ENCODE measurements at regions of chr9 and their contacts with region 1.

Region 1: DNA sequence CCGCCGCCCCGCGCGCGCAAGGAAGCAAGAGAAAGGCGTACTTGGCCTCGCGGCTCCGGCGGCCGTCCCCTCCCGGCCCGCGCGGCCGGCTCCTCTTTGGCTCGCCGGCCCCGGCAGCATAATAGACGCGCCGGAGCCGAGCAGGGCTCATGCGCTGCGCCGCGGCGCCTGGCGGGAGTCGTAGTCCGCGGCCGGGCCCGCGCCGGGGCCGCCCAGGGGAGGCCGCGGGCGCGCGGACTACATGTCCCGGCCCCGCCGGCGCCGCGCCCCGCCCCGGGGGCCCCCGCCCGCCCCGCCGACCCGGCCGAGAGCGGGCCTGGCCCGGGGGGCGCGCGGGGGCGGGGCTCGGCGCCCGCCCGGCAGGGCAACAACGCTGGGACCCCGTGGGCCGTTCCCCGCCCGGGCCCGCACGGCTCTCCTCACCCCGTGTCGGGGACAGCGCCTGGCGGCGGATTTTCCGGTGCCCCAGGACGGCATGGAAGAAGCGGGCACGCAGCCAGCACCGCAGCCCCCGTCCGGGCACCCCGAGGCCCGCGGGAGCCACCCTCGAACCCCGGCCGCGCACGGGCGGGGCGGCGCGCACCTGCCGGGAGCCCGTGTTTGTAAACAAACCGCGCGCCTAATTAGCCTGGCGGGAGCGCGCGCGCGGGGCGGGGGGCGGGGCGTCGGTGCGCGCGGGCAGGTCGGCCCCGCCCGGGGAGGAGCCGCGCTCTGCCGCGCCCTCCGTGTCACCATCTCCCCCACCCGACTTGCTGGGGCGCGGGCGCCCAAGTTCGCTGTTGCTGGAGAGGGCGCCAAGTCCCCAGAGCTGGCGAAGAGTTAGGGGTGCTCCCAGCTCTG is at the start of gene BRD3:
- DNase-seq: peak; percentile 79 to 86 (median 85)
- ATAC-seq: peak; percentile 88
- H3K4me3 ChIP-seq: peak within 1 kb of the TSS; percentile 97
- H3K4me3 Mint-ChIP-seq: peak within 1 kb of the TSS; percentile 88 to 97 (median 91)
- H3K27ac ChIP-seq: peak within 1 kb of the TSS; percentile 95
- H3K27ac Mint-ChIP-seq: peak within 1 kb of the TSS; percentile 80 to 97 (median 90)
- H3K4me1 ChIP-seq: peaks cover 21 to 26% of the 10 kb centered on the region in 2 donors
- H3K4me1 Mint-ChIP-seq: peaks cover 15 to 42% (median 29%) of the 10 kb centered on the region in 7 donors
- H3K27me3 ChIP-seq: peaks cover 0 to 4% of the 10 kb centered on the region in 2 donors
- H3K27me3 Mint-ChIP-seq: peaks cover 5 to 29% (median 14%) of the 10 kb centered on the region in 5 donors
- total RNA-seq, gene BRD3: 29.0 to 49.7 (median 40.4) TPM

Region 2: DNA sequence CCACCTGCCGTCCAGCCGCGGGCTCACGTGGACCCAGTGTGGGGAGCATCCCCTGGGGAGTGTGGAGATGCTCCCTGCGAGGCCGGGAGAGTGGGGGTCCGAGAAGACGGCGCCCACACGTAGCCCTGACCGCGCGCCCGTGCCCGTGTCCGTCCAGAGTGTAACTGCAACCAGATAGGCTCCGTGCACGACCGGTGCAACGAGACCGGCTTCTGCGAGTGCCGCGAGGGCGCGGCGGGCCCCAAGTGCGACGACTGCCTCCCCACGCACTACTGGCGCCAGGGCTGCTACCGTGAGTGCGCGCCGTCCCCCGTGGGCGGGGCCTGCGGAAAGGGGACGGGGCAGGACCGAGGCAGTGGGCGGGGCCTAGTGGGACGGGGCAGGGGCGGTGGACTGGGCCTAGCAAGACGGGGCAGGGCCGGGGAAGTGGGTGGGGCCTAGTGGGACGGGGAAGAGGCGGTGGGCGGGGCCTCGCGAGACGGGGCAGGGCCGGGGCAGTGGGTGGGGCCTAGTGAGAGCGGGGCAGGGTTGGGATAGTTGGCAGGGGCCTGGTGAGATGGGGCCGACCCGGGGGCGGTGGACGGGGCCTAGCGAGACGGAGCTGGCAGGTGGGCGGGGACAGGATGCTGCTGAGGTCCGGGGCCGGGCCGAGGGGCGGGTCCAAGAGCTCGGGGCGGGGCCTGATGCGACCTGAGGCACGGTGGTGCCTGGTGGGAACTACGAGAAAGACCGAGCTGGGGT is 1827.2 kb before region 1 on chr9:
- CTCF ChIA-PET with region 1: no interaction called
- POLR2A ChIA-PET with region 1: no interaction called
- intact Hi-C with region 1: loop called in 1 of 2 experiments (anchors 5 kb)
- DNase-seq: peak; percentile 98 to 100 (median 99)
- ATAC-seq: peak; percentile 94
- H3K4me3 ChIP-seq: peak overlapping the region; percentile 77
- H3K4me3 Mint-ChIP-seq: peak overlapping the region; percentile 97 to 99 (median 98)
- H3K27ac ChIP-seq: peak overlapping the region; percentile 69
- H3K27ac Mint-ChIP-seq: peak overlapping the region; percentile 90 to 96 (median 94)
- H3K4me1 ChIP-seq: peaks cover 11 to 17% of the 10 kb centered on the region in 2 donors
- H3K4me1 Mint-ChIP-seq: peaks cover 5 to 24% (median 21%) of the 10 kb centered on the region in 7 donors
- H3K27me3 ChIP-seq: no peaks in the 10 kb centered on the region
- H3K27me3 Mint-ChIP-seq: peaks cover 0 to 15% (median 0%) of the 10 kb centered on the region in 5 donors

Region 3: GRCh38 chr9:133149126-133150107 is 918.7 kb before region 1 on chr9:
- CTCF ChIA-PET with region 1: no interaction called
- POLR2A ChIA-PET with region 1: no interaction called
- intact Hi-C with region 1: loop called in 1 of 2 experiments (anchors 2 kb)
- DNase-seq: peak; percentile 63 to 88 (median 68)
- ATAC-seq: peak; percentile 67
- H3K4me3 ChIP-seq: peak overlapping the region; percentile 71
- H3K4me3 Mint-ChIP-seq: peak overlapping the region; percentile 55 to 83 (median 76)
- H3K27ac ChIP-seq: peak overlapping the region; percentile 80
- H3K27ac Mint-ChIP-seq: peak overlapping the region; percentile 71 to 88 (median 84)
- H3K4me1 ChIP-seq: peaks cover 27 to 34% of the 10 kb centered on the region in 2 donors
- H3K4me1 Mint-ChIP-seq: peaks cover 10 to 46% (median 35%) of the 10 kb centered on the region in 7 donors
- H3K27me3 ChIP-seq: no peaks in the 10 kb centered on the region
- H3K27me3 Mint-ChIP-seq: no peaks in the 10 kb centered on the region

Region 4: GRCh38 chr9:133992780-133993634 is 75.1 kb before region 1 on chr9:
- CTCF ChIA-PET with region 1: no interaction called
- POLR2A ChIA-PET with region 1: no interaction called
- intact Hi-C with region 1: loop called (anchors 1 kb)
- DNase-seq: peak; percentile 47 to 77 (median 63)
- ATAC-seq: peak; percentile 89
- H3K4me3 ChIP-seq: peak overlapping the region; percentile 77
- H3K4me3 Mint-ChIP-seq: peak overlapping the region; percentile 62 to 89 (median 76)
- H3K27ac ChIP-seq: peak overlapping the region; percentile 30
- H3K27ac Mint-ChIP-seq: no peak overlapping the region
- H3K4me1 ChIP-seq: peaks cover 9 to 12% of the 10 kb centered on the region in 2 donors
- H3K4me1 Mint-ChIP-seq: peaks cover 0 to 8% (median 0%) of the 10 kb centered on the region in 7 donors
- H3K27me3 ChIP-seq: no peaks in the 10 kb centered on the region
- H3K27me3 Mint-ChIP-seq: peaks cover 0 to 26% (median 4%) of the 10 kb centered on the region in 5 donors

Region 5: DNA sequence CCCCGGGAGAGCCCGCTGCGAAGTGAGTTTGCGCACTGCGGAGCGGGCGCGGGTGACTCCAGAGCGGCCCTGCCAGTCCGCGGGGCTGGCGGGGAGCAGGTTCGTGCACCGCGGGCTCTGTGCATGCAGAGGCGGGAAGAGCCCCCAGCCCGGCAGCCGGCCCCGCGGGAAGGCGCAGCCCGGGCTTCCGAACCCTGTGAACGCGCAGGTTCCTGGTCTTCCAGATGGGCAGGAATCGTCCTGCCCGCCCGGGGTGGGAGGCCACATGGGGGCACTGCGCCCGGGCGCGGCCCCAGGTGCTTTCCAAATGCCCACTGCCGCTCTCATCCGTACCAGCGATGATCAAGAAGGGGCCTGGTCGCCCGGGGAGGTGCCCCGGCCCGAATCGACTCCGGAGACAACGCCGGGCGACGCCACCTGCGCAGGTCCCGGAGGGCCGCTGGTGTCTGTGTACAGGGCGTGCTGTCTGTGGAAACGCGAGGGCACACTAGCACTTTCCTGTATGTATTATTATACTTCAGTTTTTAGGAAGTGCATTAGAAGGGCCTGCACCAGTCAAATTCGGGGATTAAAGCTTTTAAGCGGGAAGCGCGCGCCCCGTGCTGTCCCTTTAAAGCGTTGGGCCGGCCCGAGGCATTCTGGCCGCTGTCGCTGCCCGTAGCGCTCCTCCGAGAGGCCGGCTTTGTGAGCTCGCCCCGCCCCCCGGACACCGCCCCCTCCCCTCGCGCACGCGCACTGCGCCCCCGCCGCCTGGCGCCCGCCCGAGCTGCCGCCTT is 67.4 kb after region 1 on chr9 and contains the start of gene WDR5:
- CTCF ChIA-PET with region 1: no interaction called
- POLR2A ChIA-PET with region 1: interaction called, 10 read pairs
- intact Hi-C with region 1: loop called (anchors 1 kb)
- DNase-seq: peak; percentile 85 to 97 (median 92)
- ATAC-seq: peak; percentile 96
- H3K4me3 ChIP-seq: peak within 1 kb of the TSS; percentile 94
- H3K4me3 Mint-ChIP-seq: peak within 1 kb of the TSS; percentile 88 to 98 (median 92)
- H3K27ac ChIP-seq: peak within 1 kb of the TSS; percentile 80
- H3K27ac Mint-ChIP-seq: peak within 1 kb of the TSS; percentile 84 to 93 (median 89)
- H3K4me1 ChIP-seq: peaks cover 19 to 28% of the 10 kb centered on the region in 2 donors
- H3K4me1 Mint-ChIP-seq: peaks cover 33 to 65% (median 49%) of the 10 kb centered on the region in 7 donors
- H3K27me3 ChIP-seq: no peaks in the 10 kb centered on the region
- H3K27me3 Mint-ChIP-seq: no peaks in the 10 kb centered on the region
- total RNA-seq, gene WDR5: 16.0 to 42.3 (median 30.9) TPM

Region 6: DNA sequence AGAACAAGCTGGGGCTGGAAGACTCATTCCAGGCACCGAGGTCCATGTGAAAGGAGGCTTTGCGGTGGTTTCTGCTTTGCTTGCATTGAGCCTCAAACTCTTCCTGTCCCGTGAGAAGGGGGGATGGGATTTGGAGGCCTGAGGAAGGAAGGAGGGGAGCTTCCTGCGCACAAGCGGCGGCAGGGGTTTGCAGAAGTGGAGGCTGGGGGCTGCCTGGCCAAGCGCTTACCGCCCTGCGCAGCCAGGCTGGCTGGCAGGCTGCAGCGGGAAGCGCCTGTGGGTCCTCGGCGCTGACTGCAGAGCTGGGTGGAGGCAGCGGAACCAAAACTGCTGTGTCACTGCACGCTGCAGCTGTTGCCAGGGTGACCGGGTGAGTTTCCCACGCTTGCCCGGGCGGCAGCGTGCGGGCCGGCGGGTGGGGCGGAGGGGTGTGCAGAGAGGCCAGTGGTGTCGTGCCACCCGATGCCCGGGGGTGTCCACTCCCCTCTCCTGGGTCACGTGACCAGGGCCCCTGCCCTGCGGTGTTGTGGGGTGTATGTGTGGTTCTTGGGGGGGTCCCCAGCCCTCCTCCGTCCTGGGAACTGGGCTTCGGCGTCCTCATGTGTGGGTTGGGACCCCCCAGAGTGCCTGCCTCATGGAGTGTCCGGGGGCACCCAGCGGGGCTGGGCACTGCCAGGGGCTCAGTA is 339.1 kb after region 1 on chr9:
- CTCF ChIA-PET with region 1: no interaction called
- POLR2A ChIA-PET with region 1: no interaction called
- intact Hi-C with region 1: loop called in 1 of 2 experiments (anchors 5 kb)
- DNase-seq: peak; percentile 52 to 77 (median 69)
- ATAC-seq: peak; percentile 79
- H3K4me3 ChIP-seq: peak overlapping the region; percentile 51
- H3K4me3 Mint-ChIP-seq: peak overlapping the region; percentile 69 to 87 (median 79)
- H3K27ac ChIP-seq: no peak overlapping the region
- H3K27ac Mint-ChIP-seq: peak overlapping the region in 3 of 9 donors; percentile 74 to 81 (median 75)
- H3K4me1 ChIP-seq: peaks cover 40 to 49% of the 10 kb centered on the region in 2 donors
- H3K4me1 Mint-ChIP-seq: peaks cover 30 to 46% (median 41%) of the 10 kb centered on the region in 7 donors
- H3K27me3 ChIP-seq: no peaks in the 10 kb centered on the region
- H3K27me3 Mint-ChIP-seq: peaks cover 0 to 10% (median 0%) of the 10 kb centered on the region in 5 donors

Region 7: GRCh38 chr9:135907431-135908092 is 1839.4 kb after region 1 on chr9 and contains the start of gene CAMSAP1:
- CTCF ChIA-PET with region 1: no interaction called
- POLR2A ChIA-PET with region 1: no interaction called
- intact Hi-C with region 1: loop called in 1 of 2 experiments (anchors 2 kb)
- DNase-seq: peak; percentile 89 to 97 (median 93)
- ATAC-seq: peak; percentile 91
- H3K4me3 ChIP-seq: peak within 1 kb of the TSS; percentile 69
- H3K4me3 Mint-ChIP-seq: peak within 1 kb of the TSS; percentile 85 to 94 (median 90)
- H3K27ac ChIP-seq: peak within 1 kb of the TSS; percentile 89
- H3K27ac Mint-ChIP-seq: peak within 1 kb of the TSS; percentile 68 to 92 (median 83)
- H3K4me1 ChIP-seq: peaks cover 21% of the 10 kb centered on the region in 2 donors
- H3K4me1 Mint-ChIP-seq: peaks cover 33 to 74% (median 63%) of the 10 kb centered on the region in 7 donors
- H3K27me3 ChIP-seq: no peaks in the 10 kb centered on the region
- H3K27me3 Mint-ChIP-seq: no peaks in the 10 kb centered on the region
- total RNA-seq, gene CAMSAP1: 16.4 to 34.3 (median 23.6) TPM